H1 (cell line): ENCODE measurements at regions of chr10 and their contacts with region 1.

Region 1: DNA sequence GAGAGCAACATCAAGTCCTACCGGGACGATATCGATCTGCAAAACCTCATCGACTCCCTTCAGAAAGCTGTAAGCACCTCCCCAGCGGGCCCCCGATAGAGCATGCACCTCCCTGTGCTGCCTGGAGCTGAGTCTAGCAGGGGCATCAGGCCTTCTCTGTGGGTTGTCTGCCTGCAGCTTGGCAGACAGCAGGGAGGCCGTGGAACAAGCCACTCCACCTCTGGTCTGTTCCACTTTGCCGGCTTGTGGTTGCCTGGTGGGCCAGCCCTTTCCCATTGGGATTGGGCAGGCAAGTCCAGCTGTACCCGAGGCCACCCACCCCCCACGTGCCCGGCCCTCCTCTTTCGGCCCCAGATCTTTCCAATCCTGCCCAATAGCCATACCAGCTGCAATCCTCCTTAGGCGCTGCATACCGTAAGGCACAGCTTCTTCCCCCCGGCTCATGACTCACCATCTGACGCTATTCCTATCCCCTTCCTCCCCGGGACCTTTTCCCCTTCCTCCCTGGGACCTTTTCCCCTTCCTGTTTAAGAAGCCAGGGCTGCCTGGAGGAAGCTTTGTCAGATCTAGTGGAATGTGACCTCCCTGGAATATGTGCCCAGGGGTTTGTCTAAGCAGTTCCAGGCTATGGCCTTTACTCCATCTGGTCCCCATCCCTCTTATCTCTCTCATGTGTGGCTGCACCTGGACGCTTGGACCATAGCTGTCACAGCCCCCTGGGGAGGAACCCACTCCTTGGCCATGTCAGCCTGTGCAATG is 28.1 kb upstream of the SH2D4B start:
- DNase-seq: no peak
- H3K4me3 ChIP-seq: no peak overlapping the region
- H3K27ac ChIP-seq: no peak overlapping the region
- H3K4me1 ChIP-seq: peaks cover 0 to 6% (median under 1%) of the 10 kb centered on the region in 4 experiments; a peak in 3 of 7 replicates
- H3K27me3 ChIP-seq: no peaks in the 10 kb centered on the region
- CTCF ChIP-seq: no peak
- EP300 ChIP-seq: no peak
- POLR2A ChIP-seq: no peak
- RAD21 ChIP-seq: no peak

Region 2: GRCh38 chr10:80211786-80212185 is 297.8 kb before region 1 on chr10:
- CTCF ChIA-PET with region 1: no interaction called
- POLR2A ChIA-PET with region 1: no interaction called
- DNase-seq: no peak
- H3K4me3 ChIP-seq: no peak overlapping the region
- H3K27ac ChIP-seq: no peak overlapping the region
- H3K4me1 ChIP-seq: peaks cover 0 to 5% (median 1%) of the 10 kb centered on the region in 4 experiments; a peak in 4 of 7 replicates
- H3K27me3 ChIP-seq: peaks cover 0 to 10% (median 5%) of the 10 kb centered on the region in 4 experiments; a peak in 3 of 7 replicates
- CTCF ChIP-seq: no peak
- EP300 ChIP-seq: no peak
- POLR2A ChIP-seq: no peak
- RAD21 ChIP-seq: no peak

Region 3: DNA sequence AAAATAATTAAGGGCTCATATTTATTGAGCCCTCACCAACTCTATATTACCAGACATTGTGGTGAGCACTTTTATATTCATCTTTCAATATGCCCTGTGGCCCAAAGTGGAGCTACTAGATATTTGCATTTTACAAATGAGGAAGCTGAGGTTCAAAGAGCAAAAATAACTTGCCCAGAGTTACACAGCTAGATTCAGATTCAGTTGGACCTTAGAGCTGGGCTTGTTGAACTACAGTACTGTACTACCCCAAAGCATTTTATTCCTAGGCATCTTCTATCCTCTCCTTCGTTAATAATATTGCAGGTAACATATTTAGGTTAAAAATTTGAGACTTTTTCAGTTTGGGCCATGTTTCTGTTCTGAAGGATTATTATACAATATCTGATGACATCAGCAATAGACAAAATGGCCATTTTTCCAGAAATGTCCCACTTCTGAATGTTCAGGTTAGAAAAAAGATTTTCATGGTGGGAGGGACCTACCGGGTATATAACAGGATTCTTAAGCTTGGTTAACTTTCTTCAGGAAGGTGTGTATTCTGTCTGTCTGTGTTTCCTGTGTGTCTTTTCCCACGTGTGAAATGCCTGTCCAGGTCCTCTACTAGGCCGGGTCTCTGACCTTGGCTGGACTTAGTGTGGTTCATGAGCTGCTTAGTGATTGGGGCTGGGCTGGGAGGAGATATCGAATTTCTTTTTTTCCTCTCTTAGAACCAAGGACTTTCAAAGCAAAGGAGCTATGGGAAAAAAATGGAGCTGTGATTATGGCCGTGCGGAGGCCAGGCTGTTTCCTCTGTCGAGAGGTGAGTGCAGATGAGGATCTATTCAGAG is 87.7 kb before region 1 on chr10:
- CTCF ChIA-PET with region 1: interaction called, 28 read pairs
- POLR2A ChIA-PET with region 1: no interaction called
- DNase-seq: no peak
- H3K4me3 ChIP-seq: no peak overlapping the region
- H3K27ac ChIP-seq: no peak overlapping the region
- H3K4me1 ChIP-seq: peaks cover 0 to 8% (median 2%) of the 10 kb centered on the region in 4 experiments; a peak in 3 of 7 replicates
- H3K27me3 ChIP-seq: 0 out of 7 replicates have a peak, but pooled peaks cover 0 to 3% (median 0%) of the 10 kb centered on the region in 4 experiments
- CTCF ChIP-seq: no peak
- EP300 ChIP-seq: no peak
- POLR2A ChIP-seq: no peak
- RAD21 ChIP-seq: no peak

Region 4: GRCh38 chr10:80487791-80488538 is 21.6 kb before region 1 on chr10:
- CTCF ChIA-PET with region 1: interaction called, 66 read pairs
- POLR2A ChIA-PET with region 1: no interaction called
- DNase-seq: no peak
- H3K4me3 ChIP-seq: no peak overlapping the region
- H3K27ac ChIP-seq: no peak overlapping the region
- H3K4me1 ChIP-seq: peaks cover 11 to 20% (median 15%) of the 10 kb centered on the region in 4 experiments
- H3K27me3 ChIP-seq: no peaks in the 10 kb centered on the region
- CTCF ChIP-seq: no peak
- EP300 ChIP-seq: no peak
- POLR2A ChIP-seq: no peak
- RAD21 ChIP-seq: no peak

Region 5: DNA sequence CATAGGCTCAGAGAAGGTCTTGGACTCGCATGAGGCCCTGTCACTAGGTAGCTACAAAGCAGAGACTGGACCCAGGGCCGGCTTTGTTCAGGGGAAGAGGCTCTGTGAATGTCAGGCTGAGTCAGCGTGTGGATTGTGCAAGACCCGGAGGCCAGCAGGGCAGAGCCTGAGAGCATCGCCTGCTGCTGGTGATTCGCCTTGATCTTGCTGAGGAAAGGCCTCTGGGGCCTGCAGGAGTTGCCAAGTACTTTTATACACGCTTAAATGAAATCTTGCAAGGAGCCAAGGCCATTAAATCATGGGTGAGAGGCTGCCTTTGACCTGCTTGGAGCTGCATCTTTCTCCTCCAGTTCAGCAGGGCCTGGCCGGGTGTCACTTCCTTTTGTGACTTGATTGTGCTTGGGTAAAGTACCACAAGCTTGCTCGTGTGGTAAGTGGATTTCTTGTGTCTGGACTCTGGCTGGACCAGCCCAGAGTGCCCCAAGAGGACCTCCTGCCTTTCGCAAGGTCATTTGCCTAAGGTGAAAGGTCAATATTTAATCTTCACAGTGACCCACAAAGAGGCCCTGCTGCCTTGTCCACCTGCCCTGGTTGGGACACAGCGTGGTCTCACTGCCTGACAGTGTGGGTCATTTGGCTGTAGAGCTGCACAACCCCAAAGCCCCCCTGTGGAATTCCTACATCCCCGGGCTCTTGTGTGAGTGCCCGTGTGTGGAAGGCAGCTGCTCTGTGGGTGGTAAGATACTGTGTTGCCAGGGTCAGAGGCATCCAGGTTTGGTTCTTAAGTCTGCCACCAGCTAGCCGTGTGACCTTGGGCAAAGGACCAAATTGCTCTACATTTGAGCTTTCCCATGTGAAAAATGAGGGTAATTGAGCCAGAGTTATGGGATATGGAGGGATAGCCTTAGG is 10.5 kb before region 1 on chr10:
- CTCF ChIA-PET with region 1: interaction called, 66 read pairs
- POLR2A ChIA-PET with region 1: interaction called, 3 read pairs
- DNase-seq: no peak
- H3K4me3 ChIP-seq: no peak overlapping the region
- H3K27ac ChIP-seq: no peak overlapping the region
- H3K4me1 ChIP-seq: peaks cover 8 to 30% (median 15%) of the 10 kb centered on the region in 4 experiments
- H3K27me3 ChIP-seq: no peaks in the 10 kb centered on the region
- CTCF ChIP-seq: no peak
- EP300 ChIP-seq: no peak
- POLR2A ChIP-seq: no peak
- RAD21 ChIP-seq: no peak